OCI-LY7 (cell line): ENCODE measurements at regions of chr1 and their contacts with region 1.

Region 1: DNA sequence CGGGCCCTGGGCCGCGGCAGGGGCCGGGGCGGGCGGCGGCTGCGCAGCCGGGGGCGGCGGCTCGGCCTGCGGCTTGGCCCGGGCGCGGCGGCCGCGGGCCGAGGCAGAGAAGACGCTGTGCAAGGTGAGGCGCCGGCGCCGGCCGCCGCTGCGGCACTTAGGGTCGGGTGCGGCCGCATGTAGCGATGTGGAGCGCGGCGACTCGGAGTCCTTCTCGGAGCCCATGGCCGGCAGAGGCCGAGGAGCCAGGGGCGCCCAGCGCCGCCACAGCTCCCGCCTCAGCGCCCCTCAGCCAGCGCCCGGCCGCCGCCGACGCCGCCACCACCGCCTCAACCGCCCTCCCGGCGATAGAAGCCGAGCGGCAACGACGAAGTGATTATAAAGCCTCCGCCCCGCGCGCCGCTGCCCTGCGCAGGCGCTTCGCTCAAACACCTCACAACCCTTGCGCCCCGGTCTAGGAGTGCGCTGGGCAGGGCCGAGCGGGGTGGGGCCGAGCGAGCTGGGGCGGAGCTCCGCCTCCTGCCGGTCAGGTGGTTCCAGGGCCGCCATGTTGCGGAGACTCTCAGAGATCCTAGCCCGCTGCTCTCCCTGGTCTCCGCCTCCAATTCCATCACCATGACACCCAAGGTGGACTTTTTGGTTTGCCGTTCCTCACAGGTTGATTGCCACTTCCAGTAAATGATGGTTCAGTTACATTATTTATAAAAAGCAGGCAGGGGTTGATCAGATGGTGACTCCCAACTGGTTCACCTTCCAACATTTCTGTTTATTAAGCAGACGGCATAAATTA is at the start of gene RNF19B:
- DNase-seq: peak; percentile 97
- H3K4me3 ChIP-seq: peak within 1 kb of the TSS; percentile 96
- H3K27ac ChIP-seq: peak within 1 kb of the TSS; percentile 67
- H3K4me1 ChIP-seq: peaks cover 21% of the 10 kb centered on the region
- CTCF ChIP-seq: no peak
- total RNA-seq, gene RNF19B: 21.1 and 23.0 TPM in 2 replicates

Region 2: GRCh38 chr1:32981003-32981901 is 16.6 kb after region 1 on chr1:
- CTCF ChIA-PET with region 1: interaction called, 3 read pairs
- POLR2A ChIA-PET with region 1: interaction called, 17 read pairs
- intact Hi-C with region 1: no loop called
- DNase-seq: peak; percentile 90
- H3K4me3 ChIP-seq: peak overlapping the region; percentile 58
- H3K27ac ChIP-seq: peak overlapping the region; percentile 55
- H3K4me1 ChIP-seq: peaks cover 25% of the 10 kb centered on the region
- CTCF ChIP-seq: no peak

Region 3: GRCh38 chr1:33036526-33037503 is 72.2 kb after region 1 on chr1 and contains the start of gene AK2:
- CTCF ChIA-PET with region 1: no interaction called
- POLR2A ChIA-PET with region 1: interaction called, 3 read pairs
- intact Hi-C with region 1: loop called (anchors 1 kb)
- DNase-seq: peak; percentile 96
- H3K4me3 ChIP-seq: peak within 1 kb of the TSS; percentile 86
- H3K27ac ChIP-seq: peak within 1 kb of the TSS; percentile 6
- H3K4me1 ChIP-seq: peaks cover 43% of the 10 kb centered on the region
- CTCF ChIP-seq: no peak
- total RNA-seq, gene AK2: 185 and 223 TPM in 2 replicates